Activated CD4-positive, alpha-beta T cell treated with anti-CD3 and anti-CD28 coated beads for 36 hours (primary cell): ENCODE measurements at regions of chr17 and their contacts with region 1.

Region 1: GRCh38 chr17:80575057-80575875 is 30.6 kb downstream of the RPTOR start:
- DNase-seq: peak; percentile 97
- ATAC-seq: peak; percentile 100
- H3K4me3 Mint-ChIP-seq: no peak overlapping the region
- H3K27ac Mint-ChIP-seq: no peak overlapping the region
- H3K4me1 Mint-ChIP-seq: peaks cover 9% of the 10 kb centered on the region
- H3K27me3 Mint-ChIP-seq: no peaks in the 10 kb centered on the region

Region 2: GRCh38 chr17:80477647-80478478 is 97.4 kb before region 1 on chr17:
- CTCF ChIA-PET with region 1: no interaction called
- POLR2A ChIA-PET with region 1: no interaction called
- intact Hi-C with region 1: loop called in 1 of 2 experiments (anchors 2 kb)
- DNase-seq: peak; percentile 73
- ATAC-seq: peak; percentile 55
- H3K4me3 Mint-ChIP-seq: no peak overlapping the region
- H3K27ac Mint-ChIP-seq: no peak overlapping the region
- H3K4me1 Mint-ChIP-seq: peaks cover 13% of the 10 kb centered on the region
- H3K27me3 Mint-ChIP-seq: peaks cover 49% of the 10 kb centered on the region

Region 3: DNA sequence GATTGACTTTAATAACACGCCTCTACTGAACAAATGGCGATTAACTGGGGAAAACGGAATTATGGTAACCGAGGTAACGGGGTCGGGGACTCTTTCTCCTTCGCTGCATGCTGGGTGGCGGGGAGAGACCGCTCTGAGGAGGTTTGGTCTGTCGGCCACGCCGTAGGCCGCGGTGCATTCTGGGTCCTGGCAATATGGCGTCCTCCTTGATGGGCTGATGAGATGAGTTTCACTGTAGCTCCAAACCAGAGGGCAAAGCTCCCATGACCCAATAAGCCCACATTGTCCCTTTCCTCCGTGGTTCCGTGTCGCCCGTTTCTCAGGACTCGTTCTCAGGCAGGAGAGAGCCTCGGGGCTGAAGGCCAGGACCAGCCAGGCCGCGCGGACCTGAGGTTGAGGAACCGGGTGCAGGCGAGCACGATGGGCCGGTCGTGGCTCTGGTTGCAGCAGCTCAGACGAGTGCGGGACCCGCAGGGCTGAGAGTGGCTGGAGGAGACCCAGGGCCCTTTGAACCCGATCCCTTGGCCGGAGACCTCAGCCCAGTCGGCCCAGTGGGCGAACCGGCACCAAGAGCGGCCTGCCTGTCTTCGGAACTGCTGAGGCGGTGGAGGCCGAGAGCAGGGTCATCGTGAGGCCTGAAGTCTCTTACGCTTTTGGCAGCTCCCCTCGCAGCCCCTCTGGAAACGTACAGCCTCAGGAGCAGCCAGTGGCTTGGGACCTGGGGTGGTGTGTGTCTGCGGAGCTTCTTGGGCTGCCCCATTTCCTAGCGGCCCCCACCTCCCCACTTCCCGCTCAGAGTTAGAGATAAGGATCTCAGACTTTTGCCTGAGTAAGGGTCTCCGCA is 30.4 kb before region 1 on chr17 and contains the start of gene RPTOR:
- CTCF ChIA-PET with region 1: interaction called, 5 read pairs
- POLR2A ChIA-PET with region 1: no interaction called
- intact Hi-C with region 1: loop called in 1 of 2 experiments (anchors 1 kb)
- DNase-seq: peak; percentile 95
- ATAC-seq: peak; percentile 98
- H3K4me3 Mint-ChIP-seq: peak within 1 kb of the TSS; percentile 89
- H3K27ac Mint-ChIP-seq: peak within 1 kb of the TSS; percentile 91
- H3K4me1 Mint-ChIP-seq: peaks cover 32% of the 10 kb centered on the region
- H3K27me3 Mint-ChIP-seq: peaks cover 9% of the 10 kb centered on the region
- total RNA-seq, gene RPTOR: 48.6 to 58.1 TPM

Region 4: GRCh38 chr17:80621335-80621996 is 46.2 kb after region 1 on chr17:
- CTCF ChIA-PET with region 1: interaction called, 10 read pairs
- POLR2A ChIA-PET with region 1: no interaction called
- intact Hi-C with region 1: no loop called
- DNase-seq: no peak
- ATAC-seq: no peak
- H3K4me3 Mint-ChIP-seq: no peak overlapping the region
- H3K27ac Mint-ChIP-seq: no peak overlapping the region
- H3K4me1 Mint-ChIP-seq: peaks cover 37% of the 10 kb centered on the region
- H3K27me3 Mint-ChIP-seq: no peaks in the 10 kb centered on the region

Region 5: GRCh38 chr17:80899402-80900268 is 324.4 kb after region 1 on chr17:
- CTCF ChIA-PET with region 1: interaction called, 14 read pairs
- POLR2A ChIA-PET with region 1: no interaction called
- intact Hi-C with region 1: loop called (anchors 1 to 10 kb)
- DNase-seq: peak; percentile 92
- ATAC-seq: peak; percentile 82
- H3K4me3 Mint-ChIP-seq: no peak overlapping the region
- H3K27ac Mint-ChIP-seq: no peak overlapping the region
- H3K4me1 Mint-ChIP-seq: peaks cover 56% of the 10 kb centered on the region
- H3K27me3 Mint-ChIP-seq: no peaks in the 10 kb centered on the region

Region 6: DNA sequence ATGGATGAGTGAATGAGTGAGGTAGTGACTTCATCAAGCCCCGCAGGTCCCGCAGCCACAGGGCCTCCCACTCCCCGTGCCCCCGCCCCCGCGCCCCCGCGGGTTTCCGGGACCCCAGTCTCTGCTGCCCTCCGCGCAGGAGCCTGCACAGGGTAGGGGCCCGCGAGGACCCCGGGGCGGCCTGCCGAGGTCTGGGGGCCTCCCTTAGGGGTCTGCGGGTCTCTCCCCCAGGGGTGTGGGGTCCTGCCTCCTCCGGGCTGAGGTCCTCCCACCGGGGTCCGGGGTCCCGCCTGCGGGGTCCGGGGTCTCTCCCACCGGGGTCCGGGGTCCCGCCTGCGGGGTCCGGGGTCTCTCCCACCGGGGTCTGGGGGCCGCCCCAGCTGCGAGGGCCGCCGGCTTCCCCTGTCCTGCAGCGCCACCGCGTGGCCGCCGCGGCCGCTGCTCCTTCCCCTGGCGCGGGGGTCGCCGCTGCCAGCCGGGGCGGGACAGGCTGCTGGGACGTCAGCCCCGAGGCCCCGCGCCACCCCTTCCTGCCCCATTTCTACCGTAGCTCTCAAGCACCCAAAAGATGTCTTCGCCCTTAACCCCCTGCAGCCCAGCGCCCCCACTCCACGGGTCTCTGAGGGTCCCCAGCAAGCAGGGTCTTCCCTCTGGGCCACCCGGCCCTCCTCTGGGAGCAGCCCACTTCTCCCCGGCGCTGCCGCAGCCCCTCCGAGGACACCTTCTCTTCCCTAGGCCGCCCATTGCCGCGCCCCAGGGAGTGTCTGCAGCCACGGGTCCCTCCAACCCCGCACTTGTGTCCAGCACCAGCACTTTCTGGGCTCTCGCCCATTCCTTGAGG is 406.0 kb after region 1 on chr17:
- CTCF ChIA-PET with region 1: no interaction called
- POLR2A ChIA-PET with region 1: no interaction called
- intact Hi-C with region 1: loop called (anchors 2 to 10 kb)
- DNase-seq: peak; percentile 66
- ATAC-seq: peak; percentile 43
- H3K4me3 Mint-ChIP-seq: no peak overlapping the region
- H3K27ac Mint-ChIP-seq: no peak overlapping the region
- H3K4me1 Mint-ChIP-seq: peaks cover 9% of the 10 kb centered on the region
- H3K27me3 Mint-ChIP-seq: peaks cover 5% of the 10 kb centered on the region